MCF 10A (cell line): ENCODE measurements at regions of chr13 and their contacts with region 1.

Region 1: DNA sequence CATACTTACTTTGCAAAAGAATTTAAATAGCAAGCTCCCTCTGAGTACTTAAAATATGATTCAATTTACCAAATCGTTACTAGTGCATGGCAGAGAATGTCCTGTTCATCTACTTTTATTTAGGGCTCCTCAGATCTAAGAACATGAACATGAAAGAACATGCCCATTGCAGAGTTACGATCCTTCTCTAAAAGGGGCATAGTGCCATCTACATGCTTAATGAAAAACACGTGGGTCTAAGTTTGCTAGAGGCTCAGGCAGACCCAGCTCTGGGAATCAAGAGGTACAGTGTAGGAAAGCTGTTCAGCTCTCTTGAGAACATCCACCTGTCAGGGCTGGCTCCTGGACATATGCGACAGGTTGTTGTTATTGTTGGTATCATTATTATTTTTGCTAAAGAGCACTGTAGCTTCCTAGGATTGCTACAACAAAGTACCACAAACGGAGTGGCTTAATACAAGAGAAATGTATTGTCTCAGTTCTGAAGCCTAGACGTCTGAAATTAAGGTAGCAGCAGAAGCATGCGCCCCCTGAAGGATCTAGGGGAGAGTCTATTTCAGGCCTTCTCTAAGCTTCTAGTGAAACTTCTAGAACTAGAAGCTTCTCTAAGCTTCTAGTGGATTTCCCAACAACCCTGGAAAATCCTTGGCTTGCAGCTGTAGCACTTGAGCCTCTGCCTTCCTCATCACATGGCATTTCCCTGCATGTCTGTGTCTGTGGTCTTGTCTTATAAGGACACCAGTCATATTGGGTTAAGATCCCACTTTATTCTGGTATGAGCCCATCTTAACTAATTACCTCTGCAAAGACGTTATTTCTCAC is 133.9 kb downstream of the DCT start:
- DNase-seq: peak; percentile 74
- H3K4me3 Mint-ChIP-seq: no peak overlapping the region
- H3K27ac Mint-ChIP-seq: peak overlapping the region; percentile 88
- H3K4me1 Mint-ChIP-seq: peaks cover 14% of the 10 kb centered on the region
- H3K27me3 Mint-ChIP-seq: no peaks in the 10 kb centered on the region
- CTCF ChIP-seq: peak; percentile 21

Region 2: GRCh38 chr13:92896842-92897241 is 1448.7 kb before region 1 on chr13:
- CTCF ChIA-PET with region 1: interaction called, 10 read pairs
- POLR2A ChIA-PET with region 1: no interaction called
- intact Hi-C with region 1: no loop called
- DNase-seq: peak; percentile 64
- H3K4me3 Mint-ChIP-seq: no peak overlapping the region
- H3K27ac Mint-ChIP-seq: no peak overlapping the region
- H3K4me1 Mint-ChIP-seq: peaks cover 13% of the 10 kb centered on the region
- H3K27me3 Mint-ChIP-seq: no peaks in the 10 kb centered on the region
- CTCF ChIP-seq: peak; percentile 28

Region 3: DNA sequence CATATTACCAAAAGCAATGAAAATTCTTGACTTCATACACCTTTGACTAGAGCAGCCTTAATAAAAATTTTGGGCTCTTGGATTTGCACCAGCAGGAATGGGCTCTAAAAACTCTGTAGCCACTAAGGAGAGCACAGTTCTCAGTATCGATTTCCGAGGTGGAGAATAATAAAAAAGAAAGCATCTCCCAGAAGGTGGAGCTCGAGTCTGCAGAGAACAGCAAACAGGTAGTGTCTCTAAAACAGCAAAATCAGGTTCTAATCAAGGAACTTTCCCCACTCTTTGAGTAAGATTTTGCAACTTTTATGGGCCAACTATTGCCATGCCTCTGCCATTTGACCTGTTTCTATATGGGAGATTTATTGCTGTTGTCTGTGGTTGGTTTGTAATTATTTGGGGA is 1377.7 kb before region 1 on chr13:
- CTCF ChIA-PET with region 1: interaction called, 13 read pairs
- POLR2A ChIA-PET with region 1: no interaction called
- intact Hi-C with region 1: loop called (anchors 1 kb)
- DNase-seq: peak; percentile 53
- H3K4me3 Mint-ChIP-seq: no peak overlapping the region
- H3K27ac Mint-ChIP-seq: no peak overlapping the region
- H3K4me1 Mint-ChIP-seq: no peaks in the 10 kb centered on the region
- H3K27me3 Mint-ChIP-seq: no peaks in the 10 kb centered on the region
- CTCF ChIP-seq: peak; percentile 39

Region 4: DNA sequence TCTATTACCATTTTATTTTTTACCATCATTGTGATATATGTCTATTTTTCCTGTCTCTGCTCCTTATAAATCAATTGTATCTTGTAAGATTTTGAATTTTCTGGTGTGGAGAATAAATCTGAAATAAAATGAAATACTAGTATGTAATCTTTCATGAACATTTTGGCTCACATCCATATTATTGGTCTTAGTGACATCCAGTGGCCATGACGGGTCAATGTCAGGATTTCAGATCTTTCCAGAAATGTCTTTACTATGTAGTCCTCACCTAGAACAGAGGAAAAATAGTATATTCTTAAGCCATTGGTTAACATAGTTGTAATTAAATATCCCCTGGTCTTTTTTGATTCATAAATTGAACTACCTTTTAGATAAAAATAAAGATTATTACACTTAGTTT is 1228.8 kb before region 1 on chr13:
- CTCF ChIA-PET with region 1: no interaction called
- POLR2A ChIA-PET with region 1: no interaction called
- intact Hi-C with region 1: no loop called
- DNase-seq: peak; percentile 3
- H3K4me3 Mint-ChIP-seq: no peak overlapping the region
- H3K27ac Mint-ChIP-seq: no peak overlapping the region
- H3K4me1 Mint-ChIP-seq: no peaks in the 10 kb centered on the region
- H3K27me3 Mint-ChIP-seq: no peaks in the 10 kb centered on the region
- CTCF ChIP-seq: no peak

Region 5: DNA sequence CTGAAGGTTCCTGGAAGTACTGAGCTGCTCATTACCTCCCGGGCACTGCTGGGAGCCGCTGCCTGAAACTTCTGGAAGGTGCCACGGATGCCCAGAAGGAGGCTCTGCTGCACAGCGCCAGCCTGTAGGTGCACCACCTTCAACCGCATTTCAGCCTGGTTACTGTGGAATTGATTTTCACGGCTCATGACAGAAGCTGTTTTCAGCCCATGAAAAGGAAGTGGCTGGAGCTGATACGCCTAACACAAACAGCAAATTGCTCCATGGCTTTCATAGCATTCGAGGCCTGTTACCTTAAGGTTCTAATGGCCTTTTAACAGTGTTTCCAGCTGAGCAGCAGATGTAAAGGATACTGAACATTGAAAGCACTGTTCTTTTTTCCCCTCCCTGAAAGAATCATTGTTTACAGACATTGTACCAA is 1096.9 kb before region 1 on chr13:
- CTCF ChIA-PET with region 1: interaction called, 5 read pairs
- POLR2A ChIA-PET with region 1: no interaction called
- intact Hi-C with region 1: loop called (anchors 5 kb)
- DNase-seq: peak; percentile 53
- H3K4me3 Mint-ChIP-seq: no peak overlapping the region
- H3K27ac Mint-ChIP-seq: peak overlapping the region; percentile 97
- H3K4me1 Mint-ChIP-seq: peaks cover 37% of the 10 kb centered on the region
- H3K27me3 Mint-ChIP-seq: no peaks in the 10 kb centered on the region
- CTCF ChIP-seq: peak; percentile 24

Region 6: GRCh38 chr13:94093652-94094315 is 251.8 kb before region 1 on chr13:
- CTCF ChIA-PET with region 1: no interaction called
- POLR2A ChIA-PET with region 1: no interaction called
- intact Hi-C with region 1: no loop called
- DNase-seq: no peak
- H3K4me3 Mint-ChIP-seq: no peak overlapping the region
- H3K27ac Mint-ChIP-seq: no peak overlapping the region
- H3K4me1 Mint-ChIP-seq: no peaks in the 10 kb centered on the region
- H3K27me3 Mint-ChIP-seq: no peaks in the 10 kb centered on the region
- CTCF ChIP-seq: no peak

Region 7: GRCh38 chr13:94173312-94173854 is 172.2 kb before region 1 on chr13:
- CTCF ChIA-PET with region 1: interaction called, 19 read pairs
- POLR2A ChIA-PET with region 1: no interaction called
- intact Hi-C with region 1: no loop called
- DNase-seq: no peak
- H3K4me3 Mint-ChIP-seq: no peak overlapping the region
- H3K27ac Mint-ChIP-seq: no peak overlapping the region
- H3K4me1 Mint-ChIP-seq: peaks cover 12% of the 10 kb centered on the region
- H3K27me3 Mint-ChIP-seq: no peaks in the 10 kb centered on the region
- CTCF ChIP-seq: peak; percentile 7

Region 8: GRCh38 chr13:94524407-94524806 is 178.8 kb after region 1 on chr13:
- CTCF ChIA-PET with region 1: no interaction called
- POLR2A ChIA-PET with region 1: no interaction called
- intact Hi-C with region 1: no loop called
- DNase-seq: no peak
- H3K4me3 Mint-ChIP-seq: no peak overlapping the region
- H3K27ac Mint-ChIP-seq: no peak overlapping the region
- H3K4me1 Mint-ChIP-seq: no peaks in the 10 kb centered on the region
- H3K27me3 Mint-ChIP-seq: peaks cover 21% of the 10 kb centered on the region
- CTCF ChIP-seq: no peak

Region 9: GRCh38 chr13:94537740-94538630 is 192.4 kb after region 1 on chr13:
- CTCF ChIA-PET with region 1: no interaction called
- POLR2A ChIA-PET with region 1: no interaction called
- intact Hi-C with region 1: no loop called
- DNase-seq: no peak
- H3K4me3 Mint-ChIP-seq: no peak overlapping the region
- H3K27ac Mint-ChIP-seq: no peak overlapping the region
- H3K4me1 Mint-ChIP-seq: no peaks in the 10 kb centered on the region
- H3K27me3 Mint-ChIP-seq: peaks cover 31% of the 10 kb centered on the region
- CTCF ChIP-seq: no peak